ENCODE measurements at regions of chr2 and their contacts with region 1.

Region 1: DNA sequence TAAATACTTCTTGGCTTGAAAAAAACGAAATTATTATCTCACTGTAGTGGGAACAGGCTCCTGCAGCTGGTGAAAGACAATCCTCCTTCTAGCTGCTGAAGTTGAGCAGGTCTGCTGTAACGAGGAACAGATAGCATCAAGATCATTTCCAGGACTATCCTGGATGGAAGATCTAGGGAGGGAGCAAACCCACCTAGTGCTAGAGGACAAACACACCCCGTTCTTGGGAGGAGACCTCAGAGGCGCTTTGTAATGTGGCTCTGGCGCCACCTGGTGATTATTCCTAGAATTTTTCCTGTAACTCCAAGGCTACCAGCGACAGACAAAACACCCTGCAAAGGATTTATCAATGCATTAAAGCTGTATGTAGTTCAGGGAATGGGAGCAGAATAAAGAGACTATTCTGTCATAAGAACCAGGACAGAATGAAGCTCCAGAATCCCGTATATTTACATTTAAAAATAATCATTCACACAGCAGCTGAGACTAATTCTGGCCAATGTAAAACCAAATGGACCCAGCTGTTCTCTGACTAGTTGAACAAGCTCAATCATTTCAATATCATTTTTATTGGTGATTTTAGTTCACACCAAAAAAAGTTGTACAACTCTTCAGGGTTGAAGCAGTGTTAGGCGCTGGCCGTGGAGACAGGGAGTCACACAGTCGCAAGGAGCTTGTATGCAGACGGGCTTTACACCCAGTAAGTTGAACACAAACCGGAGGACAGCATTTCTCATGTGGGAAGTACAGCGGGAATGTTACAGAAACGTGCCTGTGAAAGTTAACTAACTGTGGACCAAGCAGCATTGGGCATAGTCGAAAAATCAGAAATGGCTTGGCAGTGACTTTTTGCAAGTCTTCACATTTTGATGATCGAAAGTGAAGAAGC is 290.3 kb downstream of the TRIB2 start:
- DNase-seq: peak; percentile 31 to 70 (median 55)
- ATAC-seq: peak; percentile 66
- H3K4me3 ChIP-seq: no peak overlapping the region
- H3K4me3 Mint-ChIP-seq: no peak overlapping the region
- H3K27ac ChIP-seq: no peak overlapping the region
- H3K27ac Mint-ChIP-seq: peak overlapping the region in 1 of 9 donors; percentile 5
- H3K4me1 ChIP-seq: no peaks in the 10 kb centered on the region
- H3K4me1 Mint-ChIP-seq: peaks cover 0 to 9% (median 0%) of the 10 kb centered on the region in 7 donors
- H3K27me3 ChIP-seq: no peaks in the 10 kb centered on the region
- H3K27me3 Mint-ChIP-seq: peaks cover 5 to 52% (median 11%) of the 10 kb centered on the region in 5 donors

Region 2: DNA sequence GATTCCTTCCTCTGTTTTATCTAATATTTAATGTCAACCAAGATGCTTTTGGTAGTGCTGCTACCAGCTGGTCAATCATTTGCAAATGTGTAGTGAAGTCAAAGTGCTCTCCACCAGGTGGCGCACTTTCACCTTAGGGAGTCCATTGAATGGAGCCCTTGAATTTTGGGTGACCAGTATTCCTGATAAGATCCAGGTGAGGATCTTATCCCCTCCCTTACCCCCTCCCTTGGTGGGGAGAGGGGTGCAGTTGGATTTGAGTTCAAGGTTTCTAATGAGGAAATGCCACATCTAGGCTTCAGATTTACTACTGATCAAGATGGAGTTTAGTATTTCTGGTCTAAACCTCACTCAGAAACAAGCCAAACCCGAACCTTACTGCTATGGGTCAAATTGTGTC is 1529.1 kb before region 1 on chr2:
- CTCF ChIA-PET with region 1: interaction called, 3 read pairs
- POLR2A ChIA-PET with region 1: no interaction called
- intact Hi-C with region 1: loop called in 1 of 2 experiments (anchors 5 kb)
- DNase-seq: peak; percentile 44 to 79 (median 63)
- ATAC-seq: peak; percentile 77
- H3K4me3 ChIP-seq: no peak overlapping the region
- H3K4me3 Mint-ChIP-seq: no peak overlapping the region
- H3K27ac ChIP-seq: no peak overlapping the region
- H3K27ac Mint-ChIP-seq: no peak overlapping the region
- H3K4me1 ChIP-seq: no peaks in the 10 kb centered on the region
- H3K4me1 Mint-ChIP-seq: peaks cover 0 to 8% (median 6%) of the 10 kb centered on the region in 7 donors
- H3K27me3 ChIP-seq: no peaks in the 10 kb centered on the region
- H3K27me3 Mint-ChIP-seq: peaks cover 28 to 39% (median 32%) of the 10 kb centered on the region in 5 donors

Region 3: DNA sequence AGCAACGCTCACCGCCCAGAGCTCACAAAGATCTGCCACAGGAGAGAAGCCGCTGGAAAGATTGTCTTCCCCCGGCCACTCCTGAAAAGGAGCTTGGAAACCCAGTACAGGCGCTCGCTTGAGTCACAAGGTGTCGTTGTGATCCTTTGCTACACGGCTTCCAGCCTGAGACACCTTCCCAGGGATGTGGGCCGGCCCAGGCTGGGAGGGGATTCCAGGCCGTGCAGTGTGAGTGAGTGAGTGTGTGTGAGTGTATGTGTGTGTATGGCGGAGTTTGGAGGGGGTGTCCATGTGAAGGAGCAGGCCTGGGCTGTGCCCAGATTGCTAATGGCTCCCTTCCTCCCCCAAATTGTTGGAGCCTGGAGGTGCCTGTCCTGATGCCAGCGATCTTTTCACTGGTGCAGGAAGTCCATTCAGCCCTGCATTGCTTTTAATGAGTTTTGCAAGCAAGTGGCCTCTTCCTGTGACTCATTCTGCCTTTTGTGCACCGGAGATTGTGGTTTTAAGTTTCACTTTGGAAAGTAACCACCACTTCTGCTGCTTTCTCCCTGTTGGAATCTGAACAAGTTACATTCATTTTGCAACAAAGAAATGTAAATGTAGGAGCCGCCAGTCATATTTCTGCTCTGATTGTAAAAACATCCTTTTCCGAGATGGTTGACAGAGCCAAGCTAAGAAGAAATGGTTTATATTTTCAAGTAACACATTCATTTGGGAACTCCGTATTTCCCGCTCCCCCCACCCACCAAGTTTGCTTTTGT is 1176.9 kb before region 1 on chr2:
- CTCF ChIA-PET with region 1: interaction called, 34 read pairs
- POLR2A ChIA-PET with region 1: no interaction called
- intact Hi-C with region 1: loop called (anchors 1 kb)
- DNase-seq: peak in 8 of 9 donors; percentile 53 to 73 (median 63)
- ATAC-seq: peak; percentile 86
- H3K4me3 ChIP-seq: peak overlapping the region; percentile 60
- H3K4me3 Mint-ChIP-seq: peak overlapping the region; percentile 80 to 97 (median 84)
- H3K27ac ChIP-seq: peak overlapping the region; percentile 46
- H3K27ac Mint-ChIP-seq: peak overlapping the region; percentile 21 to 87 (median 78)
- H3K4me1 ChIP-seq: peaks cover 20% of the 10 kb centered on the region in 2 donors
- H3K4me1 Mint-ChIP-seq: peaks cover 18 to 44% (median 33%) of the 10 kb centered on the region in 7 donors
- H3K27me3 ChIP-seq: no peaks in the 10 kb centered on the region
- H3K27me3 Mint-ChIP-seq: peaks cover 0 to 50% (median 0%) of the 10 kb centered on the region in 5 donors

Region 4: DNA sequence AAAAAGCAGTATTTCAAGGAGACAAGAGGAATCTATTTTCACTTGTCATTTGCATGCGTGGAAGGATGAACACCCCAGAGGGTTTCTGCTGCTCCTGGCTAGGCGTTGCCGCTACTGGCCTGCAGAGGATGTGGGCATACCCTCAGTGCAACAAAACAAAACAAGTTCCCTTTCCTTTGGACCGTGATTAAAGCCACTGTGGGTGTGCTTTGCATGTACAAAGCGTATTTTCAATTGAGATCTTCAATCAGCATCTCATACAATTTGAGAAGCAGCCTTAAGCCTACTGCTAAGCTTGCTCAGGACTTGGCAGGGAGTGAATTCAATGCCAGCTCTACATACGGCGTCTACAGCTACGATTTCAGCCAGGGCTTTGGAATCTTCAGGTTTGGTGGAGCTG is 962.2 kb before region 1 on chr2:
- CTCF ChIA-PET with region 1: no interaction called
- POLR2A ChIA-PET with region 1: no interaction called
- intact Hi-C with region 1: loop called in 1 of 2 experiments (anchors 10 kb)
- DNase-seq: peak in 6 of 9 donors; percentile 69 to 88 (median 80)
- ATAC-seq: peak; percentile 93
- H3K4me3 ChIP-seq: peak overlapping the region; percentile 2
- H3K4me3 Mint-ChIP-seq: peak overlapping the region; percentile 31 to 78 (median 62)
- H3K27ac ChIP-seq: peak overlapping the region; percentile 9
- H3K27ac Mint-ChIP-seq: peak overlapping the region; percentile 21 to 88 (median 78)
- H3K4me1 ChIP-seq: peaks cover 16 to 42% of the 10 kb centered on the region in 2 donors
- H3K4me1 Mint-ChIP-seq: peaks cover 16 to 80% (median 65%) of the 10 kb centered on the region in 7 donors
- H3K27me3 ChIP-seq: no peaks in the 10 kb centered on the region
- H3K27me3 Mint-ChIP-seq: peaks cover 0 to 19% (median 0%) of the 10 kb centered on the region in 5 donors

Region 5: GRCh38 chr2:12416600-12416999 is 590.5 kb before region 1 on chr2:
- CTCF ChIA-PET with region 1: interaction called, 3 read pairs
- POLR2A ChIA-PET with region 1: no interaction called
- intact Hi-C with region 1: loop called in 1 of 2 experiments (anchors 5 kb)
- DNase-seq: peak in 8 of 9 donors; percentile 26 to 72 (median 64)
- ATAC-seq: peak; percentile 83
- H3K4me3 ChIP-seq: no peak overlapping the region
- H3K4me3 Mint-ChIP-seq: peak overlapping the region in 9 of 10 donors; percentile 18 to 75 (median 30)
- H3K27ac ChIP-seq: no peak overlapping the region
- H3K27ac Mint-ChIP-seq: peak overlapping the region; percentile 24 to 77 (median 52)
- H3K4me1 ChIP-seq: peaks cover 16 to 23% of the 10 kb centered on the region in 2 donors
- H3K4me1 Mint-ChIP-seq: peaks cover 27 to 82% (median 66%) of the 10 kb centered on the region in 7 donors
- H3K27me3 ChIP-seq: no peaks in the 10 kb centered on the region
- H3K27me3 Mint-ChIP-seq: no peaks in the 10 kb centered on the region

Region 6: DNA sequence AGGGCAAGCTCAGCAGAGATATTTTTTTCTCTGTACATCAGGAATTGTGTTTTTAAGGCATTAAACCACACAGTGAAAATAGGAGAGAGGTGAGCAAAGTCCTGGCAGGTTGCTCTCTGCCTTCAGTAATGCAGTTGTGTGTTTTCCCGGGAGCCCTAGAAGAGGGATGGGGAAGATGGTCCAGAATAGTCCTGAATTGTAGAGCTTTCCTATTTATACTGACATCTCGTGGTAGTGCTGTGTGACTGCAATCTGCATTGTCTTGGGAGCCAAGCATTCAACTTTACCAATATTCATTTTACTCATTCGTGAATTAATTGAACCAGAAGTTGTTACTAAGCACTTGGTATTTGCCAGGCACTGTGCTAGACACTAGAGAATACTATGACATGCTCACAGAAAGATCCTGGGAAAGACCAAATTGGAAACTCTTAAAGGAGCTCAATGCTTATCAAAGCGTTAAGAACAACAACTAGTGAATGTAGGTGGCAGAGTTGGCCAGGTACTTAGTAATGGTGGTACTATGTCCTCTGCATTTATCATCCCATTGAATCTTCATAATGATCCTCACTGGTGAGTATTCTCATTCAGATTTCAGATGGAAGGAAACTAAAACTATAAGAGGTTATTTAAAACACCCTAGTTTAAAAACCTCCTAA is 75.8 kb before region 1 on chr2:
- CTCF ChIA-PET with region 1: interaction called, 11 read pairs
- POLR2A ChIA-PET with region 1: no interaction called
- intact Hi-C with region 1: loop called (anchors 1 to 2 kb)
- DNase-seq: peak in 4 of 9 donors; percentile 17 to 33 (median 26)
- ATAC-seq: peak; percentile 63
- H3K4me3 ChIP-seq: no peak overlapping the region
- H3K4me3 Mint-ChIP-seq: no peak overlapping the region
- H3K27ac ChIP-seq: no peak overlapping the region
- H3K27ac Mint-ChIP-seq: no peak overlapping the region
- H3K4me1 ChIP-seq: no peaks in the 10 kb centered on the region
- H3K4me1 Mint-ChIP-seq: peaks cover 0 to 12% (median 7%) of the 10 kb centered on the region in 7 donors
- H3K27me3 ChIP-seq: no peaks in the 10 kb centered on the region
- H3K27me3 Mint-ChIP-seq: peaks cover 0 to 50% (median 0%) of the 10 kb centered on the region in 5 donors

Region 7: DNA sequence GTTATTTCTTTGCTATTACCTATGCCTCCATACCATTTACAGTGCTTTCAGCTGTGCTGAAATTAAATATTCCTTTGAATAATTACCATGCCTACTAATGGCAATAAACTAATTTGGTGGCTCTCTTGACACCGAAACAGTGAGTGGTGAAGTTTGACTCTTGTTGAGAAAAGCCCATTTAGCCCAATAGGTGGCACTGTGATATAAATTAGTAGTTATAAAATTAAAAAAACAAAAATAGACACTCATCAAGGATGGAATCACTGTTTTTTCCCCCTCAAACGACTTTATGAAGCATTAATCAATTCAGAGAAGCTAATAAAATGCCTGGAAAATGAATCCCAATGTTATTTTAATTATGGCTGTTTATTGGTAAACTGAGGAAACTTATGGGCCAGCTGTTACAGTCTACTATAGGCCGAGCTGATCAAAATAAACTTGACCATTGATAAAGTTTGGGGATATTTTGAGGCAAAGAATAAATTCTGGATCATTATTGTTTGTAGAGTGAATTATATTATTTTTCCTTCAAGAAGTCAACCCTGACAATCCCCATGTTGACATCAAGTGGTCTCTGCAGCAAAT is 49.3 kb after region 1 on chr2:
- CTCF ChIA-PET with region 1: no interaction called
- POLR2A ChIA-PET with region 1: no interaction called
- intact Hi-C with region 1: no loop called
- DNase-seq: no peak
- ATAC-seq: no peak
- H3K4me3 ChIP-seq: no peak overlapping the region
- H3K4me3 Mint-ChIP-seq: no peak overlapping the region
- H3K27ac ChIP-seq: no peak overlapping the region
- H3K27ac Mint-ChIP-seq: no peak overlapping the region
- H3K4me1 ChIP-seq: no peaks in the 10 kb centered on the region
- H3K4me1 Mint-ChIP-seq: no peaks in the 10 kb centered on the region
- H3K27me3 ChIP-seq: no peaks in the 10 kb centered on the region
- H3K27me3 Mint-ChIP-seq: peaks cover 6 to 43% (median 17%) of the 10 kb centered on the region in 5 donors